CD4-positive, alpha-beta T cell (primary cell): ENCODE measurements at regions of chr10 and their contacts with region 1.

Region 1: GRCh38 chr10:37885850-37886249 is 28.4 kb upstream of the ZNF248 start:
- DNase-seq: no peak
- ATAC-seq: no peak
- H3K4me3 ChIP-seq: no peak overlapping the region
- H3K4me3 Mint-ChIP-seq: no peak overlapping the region
- H3K27ac ChIP-seq: no peak overlapping the region
- H3K27ac Mint-ChIP-seq: no peak overlapping the region
- H3K4me1 ChIP-seq: no peaks in the 10 kb centered on the region
- H3K4me1 Mint-ChIP-seq: no peaks in the 10 kb centered on the region
- H3K27me3 ChIP-seq: no peaks in the 10 kb centered on the region
- H3K27me3 Mint-ChIP-seq: no peaks in the 10 kb centered on the region
- CTCF ChIP-seq: no peak

Region 2: DNA sequence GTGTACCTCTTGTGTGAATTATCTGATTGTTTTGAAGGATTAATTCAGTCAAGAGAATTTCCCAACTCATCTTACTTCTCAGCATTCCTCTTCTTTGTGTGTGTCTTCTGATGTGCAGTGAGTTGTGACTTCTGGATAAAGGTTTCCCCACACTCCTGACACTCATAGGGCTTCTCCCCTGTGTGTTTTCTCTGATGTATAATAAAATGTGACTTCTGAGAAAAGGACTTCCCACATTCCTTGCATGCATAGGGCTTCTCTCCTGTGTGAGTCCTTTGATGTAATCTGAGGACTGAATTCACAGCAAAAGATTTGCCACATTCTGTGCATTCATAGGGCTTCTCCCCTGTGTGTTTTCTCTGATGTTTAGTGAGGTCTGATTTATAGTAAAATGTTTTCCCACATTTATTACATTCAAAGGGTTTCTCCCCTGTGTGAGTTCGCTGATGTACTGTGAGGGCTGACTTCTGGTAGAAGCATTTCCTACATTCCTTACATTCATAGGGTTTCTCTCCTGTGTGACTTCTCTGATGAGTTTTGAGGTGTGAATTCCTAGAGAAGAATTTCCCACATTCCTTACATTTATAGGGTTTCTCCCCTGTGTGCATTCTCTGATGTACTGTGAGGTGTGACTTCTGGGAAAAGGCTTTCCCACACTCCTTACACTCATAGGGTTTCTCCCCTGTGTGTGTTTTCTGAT is 66.4 kb after region 1 on chr10:
- CTCF ChIA-PET with region 1: no interaction called
- POLR2A ChIA-PET with region 1: no interaction called
- intact Hi-C with region 1: loop called in 1 of 2 experiments (anchors 10 kb)
- DNase-seq: no peak
- ATAC-seq: no peak
- H3K4me3 ChIP-seq: no peak overlapping the region
- H3K4me3 Mint-ChIP-seq: no peak overlapping the region
- H3K27ac ChIP-seq: no peak overlapping the region
- H3K27ac Mint-ChIP-seq: no peak overlapping the region
- H3K4me1 ChIP-seq: no peaks in the 10 kb centered on the region
- H3K4me1 Mint-ChIP-seq: no peaks in the 10 kb centered on the region
- H3K27me3 ChIP-seq: no peaks in the 10 kb centered on the region
- H3K27me3 Mint-ChIP-seq: no peaks in the 10 kb centered on the region
- CTCF ChIP-seq: no peak